ENCODE measurements at regions of chr6 and their contacts with region 1.

Region 1: DNA sequence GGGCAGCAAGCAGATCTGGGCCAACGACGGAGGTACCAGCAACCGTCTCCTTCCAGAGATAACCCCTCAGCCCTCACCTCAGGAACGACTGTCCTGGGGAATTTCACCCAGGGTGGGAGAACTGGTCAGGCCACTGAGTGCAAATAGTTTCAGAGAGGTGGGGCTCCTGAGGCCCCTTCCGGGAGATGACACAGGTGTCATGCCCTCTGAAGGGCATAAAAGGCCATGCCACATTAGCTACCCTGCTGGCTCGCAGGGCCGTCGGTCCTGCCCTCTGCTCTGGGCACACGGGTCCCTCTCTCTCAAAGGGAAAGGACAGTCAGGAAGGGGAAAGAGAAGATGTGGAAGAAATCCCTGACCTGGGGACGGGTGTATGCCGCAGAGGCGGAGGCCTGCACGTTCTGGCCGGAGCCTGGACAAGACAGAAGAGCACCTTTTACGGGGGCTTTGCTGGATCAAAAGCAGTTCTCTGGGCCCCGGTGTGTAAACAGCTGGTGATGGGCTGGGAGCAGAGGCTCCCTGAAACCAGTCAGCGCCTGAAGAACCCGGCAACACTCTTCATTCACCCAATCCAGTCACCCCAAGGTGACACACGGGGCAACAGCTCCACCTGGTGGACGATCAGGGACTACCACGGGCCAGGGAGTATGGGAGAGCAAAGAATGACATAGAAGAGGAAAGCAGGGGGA is 6.4 kb upstream of the TAF8 start:
- DNase-seq: peak; percentile 96
- ATAC-seq: peak; percentile 78
- H3K4me3 Mint-ChIP-seq: peak overlapping the region; percentile 38; the same call in 1 of the 2 replicates
- H3K27ac Mint-ChIP-seq: no peak overlapping the region
- H3K4me1 Mint-ChIP-seq: peaks cover 42% of the 10 kb centered on the region
- H3K27me3 Mint-ChIP-seq: peaks cover 82% of the 10 kb centered on the region
- CTCF ChIP-seq: peak; percentile 97

Region 2: DNA sequence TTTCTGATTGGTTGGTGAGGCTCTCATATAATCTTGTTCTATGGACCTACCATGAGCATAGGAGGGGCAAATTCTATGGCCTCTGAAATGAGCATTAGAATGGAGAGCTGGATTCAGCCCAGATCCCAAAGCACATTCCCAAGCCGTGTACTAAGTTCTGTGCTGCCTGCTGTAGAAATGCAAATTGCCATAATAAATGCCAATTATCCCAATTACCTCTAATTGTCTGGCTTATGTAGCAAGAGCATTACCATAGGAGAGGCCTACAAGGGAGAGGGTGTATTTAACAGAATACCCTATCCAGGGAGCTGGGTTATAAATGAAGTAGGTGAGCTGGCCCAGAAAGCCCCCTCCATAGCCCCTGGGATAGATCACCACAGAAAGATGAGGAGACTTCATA is 1583.6 kb before region 1 on chr6:
- CTCF ChIA-PET with region 1: no interaction called
- POLR2A ChIA-PET with region 1: no interaction called
- DNase-seq: no peak
- ATAC-seq: no peak
- H3K4me3 Mint-ChIP-seq: no peak overlapping the region
- H3K27ac Mint-ChIP-seq: no peak overlapping the region
- H3K4me1 Mint-ChIP-seq: no peaks in the 10 kb centered on the region
- H3K27me3 Mint-ChIP-seq: no peaks in the 10 kb centered on the region
- CTCF ChIP-seq: no peak

Region 3: DNA sequence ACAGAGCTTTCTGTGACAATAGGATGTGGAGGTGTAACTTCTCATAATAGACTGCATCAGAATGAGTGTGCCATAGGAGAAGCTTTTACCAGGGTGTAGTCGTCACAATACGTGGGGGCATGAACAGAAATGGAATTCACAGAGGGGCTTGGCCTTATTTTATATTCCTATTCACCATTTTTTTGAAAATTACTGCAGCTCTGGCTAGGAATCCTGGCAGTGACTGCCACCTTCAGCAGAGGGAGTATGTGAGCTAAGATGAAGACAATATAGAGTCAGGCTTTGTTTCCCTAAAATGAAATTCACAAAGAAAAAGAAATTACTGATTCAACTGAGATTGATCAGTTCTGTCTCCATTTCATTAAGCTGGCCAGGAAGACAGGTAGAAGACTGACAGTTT is 242.6 kb before region 1 on chr6:
- CTCF ChIA-PET with region 1: interaction called, 20 read pairs
- POLR2A ChIA-PET with region 1: no interaction called
- DNase-seq: no peak
- ATAC-seq: peak; percentile 60
- H3K4me3 Mint-ChIP-seq: no peak overlapping the region
- H3K27ac Mint-ChIP-seq: no peak overlapping the region
- H3K4me1 Mint-ChIP-seq: no peaks in the 10 kb centered on the region
- H3K27me3 Mint-ChIP-seq: no peaks in the 10 kb centered on the region
- CTCF ChIP-seq: no peak

Region 4: GRCh38 chr6:41846666-41847237 is 197.2 kb before region 1 on chr6:
- CTCF ChIA-PET with region 1: interaction called, 19 read pairs
- POLR2A ChIA-PET with region 1: no interaction called
- DNase-seq: peak; percentile 68
- ATAC-seq: peak; percentile 89
- H3K4me3 Mint-ChIP-seq: no peak overlapping the region
- H3K27ac Mint-ChIP-seq: peak overlapping the region; percentile 84; the same call in 1 of the 2 replicates
- H3K4me1 Mint-ChIP-seq: peaks cover 2% of the 10 kb centered on the region; the same call in 1 of the 2 replicates
- H3K27me3 Mint-ChIP-seq: no peaks in the 10 kb centered on the region
- CTCF ChIP-seq: peak; percentile 53

Region 5: GRCh38 chr6:41936073-41936837 is 107.7 kb before region 1 on chr6:
- CTCF ChIA-PET with region 1: interaction called, 91 read pairs
- POLR2A ChIA-PET with region 1: interaction called, 4 read pairs
- DNase-seq: peak; percentile 61
- ATAC-seq: peak; percentile 49
- H3K4me3 Mint-ChIP-seq: no peak overlapping the region
- H3K27ac Mint-ChIP-seq: 0 out of 2 replicates have a peak overlapping the region, but pooled peaks have one; percentile 78
- H3K4me1 Mint-ChIP-seq: peaks cover 26% of the 10 kb centered on the region
- H3K27me3 Mint-ChIP-seq: no peaks in the 10 kb centered on the region
- CTCF ChIP-seq: peak; percentile 77

Region 6: DNA sequence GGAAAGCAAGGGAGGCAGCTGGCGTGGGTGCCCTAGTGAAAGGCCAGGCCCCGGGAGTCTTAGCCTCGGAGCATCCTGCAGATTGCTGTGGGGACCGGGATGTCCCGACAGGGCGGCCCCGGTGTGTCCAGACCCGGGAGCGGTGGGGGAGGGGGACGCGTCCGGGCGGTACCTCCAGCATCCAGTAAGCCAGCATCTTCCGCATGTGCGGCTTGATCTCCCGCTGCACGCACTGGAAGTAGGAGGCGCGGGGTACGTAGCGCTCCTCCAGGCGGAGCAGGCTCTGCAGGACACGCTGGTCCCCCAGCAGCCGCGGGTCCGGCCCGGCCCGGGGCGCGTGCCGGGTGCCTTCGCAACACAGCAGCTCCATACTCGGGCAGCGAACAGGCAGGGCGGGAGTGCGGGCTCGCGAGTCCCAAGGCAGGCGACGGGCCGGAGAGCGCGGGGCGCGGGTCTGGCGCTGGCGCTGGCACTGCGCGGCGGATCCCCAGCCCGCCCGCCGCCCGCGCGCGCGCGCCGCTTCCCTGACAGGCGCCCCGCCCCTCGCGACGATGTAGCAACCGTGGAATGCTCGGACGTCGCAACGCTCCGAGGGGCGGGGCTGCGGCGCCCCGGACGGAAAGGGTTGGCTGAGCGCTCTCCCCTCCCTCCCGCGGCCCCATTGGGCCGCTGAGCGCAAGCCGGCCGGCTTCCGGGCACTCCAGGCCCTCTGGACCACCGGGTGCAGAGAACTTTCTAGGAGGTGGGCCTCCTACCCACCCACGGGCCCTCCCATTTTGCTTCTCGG is 102.5 kb before region 1 on chr6 and contains the start of gene CCND3:
- CTCF ChIA-PET with region 1: interaction called, 91 read pairs
- POLR2A ChIA-PET with region 1: interaction called, 4 read pairs
- DNase-seq: peak; percentile 81
- ATAC-seq: peak; percentile 62
- H3K4me3 Mint-ChIP-seq: peak within 1 kb of the TSS; percentile 92
- H3K27ac Mint-ChIP-seq: peak within 1 kb of the TSS; percentile 46
- H3K4me1 Mint-ChIP-seq: peaks cover 32% of the 10 kb centered on the region
- H3K27me3 Mint-ChIP-seq: no peaks in the 10 kb centered on the region
- CTCF ChIP-seq: no peak
- total RNA-seq, gene CCND3: 23.0 to 33.6 TPM (median 23.0 TPM) in 3 replicates

Region 7: GRCh38 chr6:42030585-42031506 is 13.1 kb before region 1 on chr6:
- CTCF ChIA-PET with region 1: interaction called, 13 read pairs
- POLR2A ChIA-PET with region 1: no interaction called
- DNase-seq: peak; percentile 24
- ATAC-seq: peak; percentile 76
- H3K4me3 Mint-ChIP-seq: no peak overlapping the region
- H3K27ac Mint-ChIP-seq: no peak overlapping the region
- H3K4me1 Mint-ChIP-seq: peaks cover 12% of the 10 kb centered on the region
- H3K27me3 Mint-ChIP-seq: peaks cover 5% of the 10 kb centered on the region; the same call in 1 of the 2 replicates
- CTCF ChIP-seq: no peak

Region 8: GRCh38 chr6:42059743-42060142 is 15.8 kb after region 1 on chr6:
- CTCF ChIA-PET with region 1: no interaction called
- POLR2A ChIA-PET with region 1: no interaction called
- DNase-seq: no peak
- ATAC-seq: no peak
- H3K4me3 Mint-ChIP-seq: no peak overlapping the region
- H3K27ac Mint-ChIP-seq: no peak overlapping the region
- H3K4me1 Mint-ChIP-seq: no peaks in the 10 kb centered on the region
- H3K27me3 Mint-ChIP-seq: no peaks in the 10 kb centered on the region
- CTCF ChIP-seq: no peak

Region 9: DNA sequence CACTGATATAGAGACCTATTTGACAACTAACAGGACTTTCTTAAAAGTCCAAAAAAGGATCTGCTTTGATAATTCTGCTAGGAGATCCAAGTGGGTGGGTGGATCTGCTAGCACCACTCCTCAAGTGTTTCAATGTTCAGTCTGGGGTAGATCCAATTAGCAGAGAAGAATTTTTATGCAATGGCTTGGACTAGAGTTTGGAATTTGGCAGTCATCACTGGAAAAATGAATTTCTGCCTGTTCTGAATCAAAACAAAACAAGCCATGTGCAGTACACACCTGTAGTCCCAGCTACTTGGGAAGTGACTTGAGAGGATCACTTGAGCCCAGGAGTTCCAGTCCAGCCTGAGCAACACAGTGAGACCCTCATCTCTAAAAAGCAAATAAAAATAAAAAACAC is 904.0 kb after region 1 on chr6:
- CTCF ChIA-PET with region 1: no interaction called
- POLR2A ChIA-PET with region 1: no interaction called
- DNase-seq: no peak
- ATAC-seq: no peak
- H3K4me3 Mint-ChIP-seq: no peak overlapping the region
- H3K27ac Mint-ChIP-seq: peak overlapping the region; percentile 15; the same call in 1 of the 2 replicates
- H3K4me1 Mint-ChIP-seq: peaks cover 9% of the 10 kb centered on the region
- H3K27me3 Mint-ChIP-seq: no peaks in the 10 kb centered on the region
- CTCF ChIP-seq: no peak